ENCODE measurements at regions of chr15 and their contacts with region 1.

Region 1: DNA sequence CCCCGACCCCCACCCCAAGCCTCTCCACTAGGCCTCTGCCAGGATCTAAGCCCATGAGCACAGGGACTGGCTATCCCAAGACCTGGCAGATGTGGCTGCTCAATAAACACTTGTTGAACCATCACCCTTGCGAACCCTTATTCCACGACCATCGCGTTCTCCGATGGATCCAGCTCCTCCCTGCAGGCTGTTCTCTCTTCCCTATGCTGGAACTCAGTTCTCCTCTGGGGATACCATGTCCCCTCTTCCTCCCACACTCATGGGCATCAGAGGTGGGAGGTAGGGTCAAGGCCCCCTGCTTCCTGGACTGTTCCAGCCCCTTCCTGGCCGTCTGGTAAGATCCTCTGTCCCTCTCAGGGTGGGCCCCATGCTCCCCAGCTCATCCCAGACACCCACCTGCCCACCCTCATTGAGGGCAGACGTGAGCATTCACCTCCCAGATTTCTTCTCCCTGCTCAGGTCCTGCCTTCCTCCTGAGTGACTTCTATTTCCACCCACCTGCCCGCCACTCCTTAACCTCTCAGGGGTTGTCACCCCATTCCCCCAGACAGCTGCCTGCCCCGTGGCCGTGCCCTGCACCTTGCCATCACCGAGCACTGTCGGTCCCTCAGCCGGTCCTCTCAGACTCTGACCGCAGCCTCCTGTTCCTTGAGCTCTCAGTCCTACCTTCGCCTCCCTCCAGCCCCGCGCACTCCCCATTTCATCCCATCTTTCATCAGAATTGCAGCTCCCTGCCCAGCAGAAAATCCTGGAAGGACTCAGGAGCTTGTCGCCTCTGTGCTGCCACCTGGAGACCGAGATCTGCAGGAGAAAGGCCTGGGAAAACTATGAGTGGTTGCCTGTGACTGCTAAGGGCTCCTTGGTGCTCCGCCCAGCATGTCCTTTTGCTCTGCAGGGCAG is 42.0 kb downstream of the PML start:
- DNase-seq: peak; percentile 76
- H3K4me3 ChIP-seq: no peak overlapping the region; a peak in 1 of 4 replicates
- H3K27ac ChIP-seq: no peak overlapping the region
- H3K4me1 ChIP-seq: peaks cover 8 to 22% of the 10 kb centered on the region in 2 experiments; a peak in 2 of 4 replicates
- H3K27me3 ChIP-seq: no peaks in the 10 kb centered on the region
- CTCF ChIP-seq: peak; percentile 64
- EP300 ChIP-seq: no peak
- RAD21 ChIP-seq: peak; percentile 55

Region 2: GRCh38 chr15:73964736-73965093 is 71.8 kb before region 1 on chr15:
- CTCF ChIA-PET with region 1: interaction called, 280 read pairs
- POLR2A ChIA-PET with region 1: no interaction called
- DNase-seq: peak; percentile 82
- H3K4me3 ChIP-seq: peak overlapping the region in 1 of 2 experiments; percentile 29; a peak in 1 of 4 replicates
- H3K27ac ChIP-seq: no peak overlapping the region
- H3K4me1 ChIP-seq: peaks cover 6 to 26% of the 10 kb centered on the region in 2 experiments; a peak in 3 of 4 replicates
- H3K27me3 ChIP-seq: no peaks in the 10 kb centered on the region
- CTCF ChIP-seq: peak; percentile 92
- EP300 ChIP-seq: no peak
- RAD21 ChIP-seq: peak; percentile 70

Region 3: DNA sequence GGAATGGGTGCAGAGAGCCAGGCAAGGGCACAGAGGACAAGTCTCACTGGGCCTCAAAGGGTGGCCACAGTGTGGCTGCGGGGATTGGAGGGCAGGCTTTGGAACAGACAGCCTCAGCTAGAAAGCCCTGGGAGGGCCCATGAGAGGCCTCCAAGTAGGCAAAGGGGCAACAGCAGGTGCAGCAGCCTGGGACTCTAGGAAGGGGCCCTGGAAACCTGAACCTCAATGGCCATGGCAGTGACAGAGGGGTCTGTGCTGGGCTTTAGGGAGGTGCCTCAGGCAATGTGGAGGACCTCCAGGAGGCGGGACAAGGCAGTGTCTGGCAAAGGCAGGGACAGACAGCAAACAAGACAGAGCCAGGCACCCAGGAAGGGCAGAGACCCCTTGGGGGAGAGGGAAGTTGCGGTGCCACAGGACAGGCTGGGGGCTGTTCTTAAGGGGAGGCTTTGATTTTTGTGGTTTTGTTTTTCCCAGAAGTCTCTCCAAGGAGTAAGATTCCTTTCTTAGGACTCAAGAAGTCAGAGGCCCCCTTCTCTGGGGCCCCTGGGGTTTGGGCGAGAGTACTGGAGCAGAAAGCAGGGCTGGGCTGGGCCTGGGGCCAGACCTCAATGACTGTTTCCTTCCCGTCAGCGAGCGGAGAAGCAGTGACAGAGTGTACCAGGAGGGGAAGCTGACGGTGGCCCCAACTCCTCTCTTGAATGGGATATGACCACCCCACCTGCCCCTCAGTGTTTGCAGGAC is 54.1 kb before region 1 on chr15:
- CTCF ChIA-PET with region 1: interaction called, 280 read pairs
- POLR2A ChIA-PET with region 1: no interaction called
- DNase-seq: no peak
- H3K4me3 ChIP-seq: no peak overlapping the region
- H3K27ac ChIP-seq: peak overlapping the region; percentile 90 to 95
- H3K4me1 ChIP-seq: peaks cover 29 to 38% of the 10 kb centered on the region in 2 experiments; a peak in 3 of 4 replicates
- H3K27me3 ChIP-seq: no peaks in the 10 kb centered on the region
- CTCF ChIP-seq: no peak
- EP300 ChIP-seq: peak in 1 of 2 experiments; percentile 90; a peak in 2 of 4 replicates
- RAD21 ChIP-seq: no peak

Region 4: DNA sequence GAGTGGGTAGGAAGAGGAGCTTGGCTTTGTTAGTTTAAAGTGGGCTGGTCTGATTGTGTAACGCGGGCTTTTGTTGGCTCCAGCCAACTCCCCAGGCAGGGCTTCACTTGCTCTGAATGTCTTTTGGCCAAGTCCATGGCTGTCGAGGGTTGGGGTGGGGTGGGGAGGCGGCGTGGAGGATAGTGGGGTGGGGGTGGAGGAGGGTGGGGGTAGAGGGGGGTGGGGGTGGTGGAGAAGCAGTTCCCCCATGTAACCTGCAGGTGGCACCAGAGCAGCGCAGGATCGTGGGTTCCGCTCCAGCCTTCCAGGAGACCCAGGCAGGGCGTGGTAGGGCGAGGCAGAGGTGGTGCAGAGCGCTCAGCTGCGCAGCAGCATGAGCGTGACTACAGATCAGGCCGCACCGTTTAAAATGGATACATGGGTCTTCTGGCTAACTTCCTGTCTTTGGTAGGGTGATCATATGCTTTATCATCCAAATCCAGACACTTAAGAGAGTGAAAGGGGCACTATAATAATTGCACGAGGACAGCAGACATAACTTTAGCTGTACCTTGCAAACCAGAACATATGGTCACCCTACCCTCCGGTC is 17.5 kb after region 1 on chr15:
- CTCF ChIA-PET with region 1: interaction called, 115 read pairs
- POLR2A ChIA-PET with region 1: no interaction called
- DNase-seq: peak; percentile 94
- H3K4me3 ChIP-seq: peak overlapping the region in 1 of 2 experiments; percentile 8; a peak in 1 of 4 replicates
- H3K27ac ChIP-seq: peak overlapping the region in 1 of 2 experiments; percentile 35; a peak in 2 of 4 replicates
- H3K4me1 ChIP-seq: peaks cover 15 to 18% of the 10 kb centered on the region in 2 experiments; a peak in 3 of 4 replicates
- H3K27me3 ChIP-seq: no peaks in the 10 kb centered on the region
- CTCF ChIP-seq: peak; percentile 56
- EP300 ChIP-seq: no peak
- RAD21 ChIP-seq: peak; percentile 80

Region 5: GRCh38 chr15:74127260-74127953 is 90.9 kb after region 1 on chr15:
- CTCF ChIA-PET with region 1: no interaction called
- POLR2A ChIA-PET with region 1: no interaction called
- DNase-seq: peak; percentile 94
- H3K4me3 ChIP-seq: peak overlapping the region; percentile 42 to 59
- H3K27ac ChIP-seq: peak overlapping the region in 1 of 2 experiments; percentile 65; a peak in 1 of 4 replicates
- H3K4me1 ChIP-seq: peaks cover 0 to 31% of the 10 kb centered on the region in 2 experiments; a peak in 1 of 4 replicates
- H3K27me3 ChIP-seq: peaks cover 32% of the 10 kb centered on the region
- CTCF ChIP-seq: peak; percentile 80
- EP300 ChIP-seq: no peak
- RAD21 ChIP-seq: peak; percentile 97

Region 6: GRCh38 chr15:75195122-75195765 is 1158.7 kb after region 1 on chr15:
- CTCF ChIA-PET with region 1: no interaction called
- POLR2A ChIA-PET with region 1: no interaction called
- DNase-seq: peak; percentile 91
- H3K4me3 ChIP-seq: no peak overlapping the region; a peak in 1 of 4 replicates
- H3K27ac ChIP-seq: peak overlapping the region in 1 of 2 experiments; percentile 29; a peak in 1 of 4 replicates
- H3K4me1 ChIP-seq: peaks cover 0 to 44% of the 10 kb centered on the region in 2 experiments; a peak in 1 of 4 replicates
- H3K27me3 ChIP-seq: no peaks in the 10 kb centered on the region
- CTCF ChIP-seq: no peak
- EP300 ChIP-seq: no peak
- RAD21 ChIP-seq: no peak; the same call in 1 of the 2 replicates

Measured in SK-N-SH (cell line).